Activated T-helper 1 cell treated with anti-CD3 and anti-CD28 coated beads, Interleukin-12 subunit alpha, Interleukin-12 subunit beta, Interleukin-2, Interleukin-4 antibody, amounts not matched to agents 30 ng/mL and 10 ng/mL and 1 ng/mL, durations not matched to agents 14 hours and 24 hours and 36 hours (primary cell): ENCODE measurements at regions of chr1 and their contacts with region 1.

Region 1: GRCh38 chr1:192550922-192551534 is 24.5 kb upstream of the RGS1 start:
- DNase-seq: no peak
- H3K4me3 Mint-ChIP-seq: peak overlapping the region; percentile 10
- H3K27ac Mint-ChIP-seq: peak overlapping the region; percentile 63
- H3K4me1 Mint-ChIP-seq: peaks cover 65% of the 10 kb centered on the region
- H3K27me3 Mint-ChIP-seq: no peaks in the 10 kb centered on the region

Region 2: DNA sequence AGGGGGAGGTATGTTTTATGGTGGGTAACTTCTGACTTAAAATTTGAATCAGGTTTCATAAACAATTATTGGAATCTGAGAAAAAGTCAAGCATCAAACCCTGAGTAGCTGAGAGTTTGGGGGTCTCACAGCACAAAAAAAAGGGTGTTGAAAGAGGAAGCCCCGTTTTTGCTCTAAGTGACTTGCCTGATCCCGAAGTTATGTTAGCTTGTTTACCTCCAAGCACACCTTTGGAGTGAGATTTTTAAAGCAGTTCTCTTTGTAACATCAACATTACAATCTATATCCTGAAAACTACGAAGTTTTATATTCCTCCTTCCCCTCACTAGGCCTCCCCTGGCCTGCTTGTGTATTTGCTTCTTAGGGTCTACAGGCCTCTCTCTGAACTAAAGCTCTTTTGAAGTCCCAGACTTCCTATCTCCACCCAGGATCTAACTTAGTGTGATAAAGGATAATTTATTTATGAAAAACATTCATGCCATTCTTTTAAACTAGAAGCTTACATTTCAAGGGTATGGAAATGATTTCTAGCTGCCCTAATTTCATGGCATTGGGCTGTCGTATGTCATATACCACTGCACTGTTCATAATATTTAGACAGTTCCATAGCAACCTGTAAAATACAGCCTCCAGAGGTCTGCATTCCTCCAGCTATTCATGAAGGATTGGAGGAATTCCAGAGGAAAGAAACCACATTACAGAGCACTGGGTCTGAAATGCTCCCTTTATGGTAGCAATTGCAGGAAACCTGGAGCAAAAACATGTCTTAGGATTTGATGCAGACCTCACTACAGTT is 11.5 kb before region 1 on chr1:
- intact Hi-C with region 1: loop called (anchors 1 kb)
- DNase-seq: no peak
- H3K4me3 Mint-ChIP-seq: peak overlapping the region; percentile 66
- H3K27ac Mint-ChIP-seq: peak overlapping the region; percentile 90
- H3K4me1 Mint-ChIP-seq: peaks cover 73% of the 10 kb centered on the region
- H3K27me3 Mint-ChIP-seq: no peaks in the 10 kb centered on the region

Region 3: GRCh38 chr1:192601567-192601966 is 50.5 kb after region 1 on chr1:
- intact Hi-C with region 1: loop called (anchors 2 kb)
- DNase-seq: no peak
- H3K4me3 Mint-ChIP-seq: no peak overlapping the region
- H3K27ac Mint-ChIP-seq: no peak overlapping the region
- H3K4me1 Mint-ChIP-seq: peaks cover 15% of the 10 kb centered on the region
- H3K27me3 Mint-ChIP-seq: peaks cover 4% of the 10 kb centered on the region